ENCODE measurements at regions of chr3 and their contacts with region 1.

Region 1: GRCh38 chr3:130711565-130712324 is 34.9 kb downstream of the PIK3R4 start:
- DNase-seq: no peak
- CTCF ChIP-seq: no peak

Region 2: DNA sequence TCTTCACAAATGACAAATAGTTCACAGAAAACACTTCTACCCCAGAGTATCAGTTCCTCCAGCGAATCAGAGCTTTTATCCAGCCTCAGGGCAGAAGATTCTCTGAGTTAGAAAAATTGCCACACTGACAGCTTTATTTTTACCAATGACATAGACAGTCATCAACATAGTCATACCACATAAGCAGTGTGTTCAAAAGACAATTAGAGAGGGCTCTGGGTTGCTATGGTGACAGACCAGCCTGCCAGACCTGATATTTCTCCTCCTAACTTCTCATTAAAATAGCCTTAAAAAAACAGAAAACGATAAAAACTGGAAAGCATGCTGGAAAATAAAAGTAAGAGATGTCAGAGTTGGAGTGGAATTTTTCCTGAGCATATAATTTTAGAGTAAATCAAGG is 412.2 kb before region 1 on chr3:
- CTCF ChIA-PET with region 1: no interaction called
- POLR2A ChIA-PET with region 1: no interaction called
- DNase-seq: no peak
- CTCF ChIP-seq: no peak

Region 3: DNA sequence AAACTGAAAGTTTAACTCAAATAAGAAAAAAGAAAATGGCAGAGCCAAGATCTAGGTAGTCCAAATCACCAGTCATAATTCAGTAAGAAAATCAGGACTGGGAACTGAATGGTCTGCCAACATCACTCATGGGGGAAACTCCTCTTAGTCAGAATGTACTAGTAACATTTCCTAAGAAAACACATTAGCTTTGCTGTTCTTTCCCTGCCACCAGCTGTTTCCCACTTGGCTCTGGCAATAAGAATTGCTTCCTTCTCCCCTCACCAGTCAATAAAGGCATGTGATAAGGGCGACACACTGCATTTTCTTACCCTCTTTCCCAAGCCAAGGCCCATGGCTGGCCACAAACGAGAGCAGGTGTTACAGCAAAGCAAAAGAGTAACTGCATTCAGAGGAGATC is 11.2 kb before region 1 on chr3:
- CTCF ChIA-PET with region 1: interaction called, 12 read pairs
- POLR2A ChIA-PET with region 1: no interaction called
- DNase-seq: no peak
- CTCF ChIP-seq: no peak